ENCODE measurements at regions of chr12 and their contacts with region 1.

Region 1: GRCh38 chr12:124906606-124907261 is 7.7 kb downstream of the UBC start:
- DNase-seq: peak; percentile 92
- ATAC-seq: peak; percentile 71
- H3K4me3 Mint-ChIP-seq: no peak overlapping the region
- H3K27ac Mint-ChIP-seq: no peak overlapping the region
- H3K4me1 Mint-ChIP-seq: peaks cover 35% of the 10 kb centered on the region
- H3K27me3 Mint-ChIP-seq: no peaks in the 10 kb centered on the region
- CTCF ChIP-seq: peak; percentile 91

Region 2: DNA sequence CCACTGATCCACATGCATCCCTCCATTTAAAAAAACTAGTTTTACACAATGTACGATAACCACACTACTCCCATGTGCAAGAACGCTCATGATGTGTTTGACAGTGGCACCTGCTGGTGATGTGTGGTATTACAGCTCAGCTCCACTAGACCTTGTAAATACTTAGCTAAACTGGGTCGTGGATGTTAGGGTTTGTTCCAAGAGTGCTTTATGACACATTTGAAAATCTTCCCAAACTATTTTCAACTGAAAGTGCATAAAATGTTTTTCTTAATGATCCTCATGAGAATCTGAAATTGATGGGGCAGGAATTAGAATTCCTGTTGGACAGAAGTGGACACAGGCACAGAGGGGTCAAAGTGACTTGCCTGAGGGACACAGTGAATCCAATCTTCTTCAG is 142.3 kb before region 1 on chr12:
- CTCF ChIA-PET with region 1: no interaction called
- POLR2A ChIA-PET with region 1: no interaction called
- DNase-seq: peak; percentile 61
- ATAC-seq: no peak; the same call in 1 of the 2 replicates
- H3K4me3 Mint-ChIP-seq: no peak overlapping the region
- H3K27ac Mint-ChIP-seq: no peak overlapping the region
- H3K4me1 Mint-ChIP-seq: no peaks in the 10 kb centered on the region
- H3K27me3 Mint-ChIP-seq: peaks cover 3% of the 10 kb centered on the region
- CTCF ChIP-seq: peak; percentile 86

Region 3: DNA sequence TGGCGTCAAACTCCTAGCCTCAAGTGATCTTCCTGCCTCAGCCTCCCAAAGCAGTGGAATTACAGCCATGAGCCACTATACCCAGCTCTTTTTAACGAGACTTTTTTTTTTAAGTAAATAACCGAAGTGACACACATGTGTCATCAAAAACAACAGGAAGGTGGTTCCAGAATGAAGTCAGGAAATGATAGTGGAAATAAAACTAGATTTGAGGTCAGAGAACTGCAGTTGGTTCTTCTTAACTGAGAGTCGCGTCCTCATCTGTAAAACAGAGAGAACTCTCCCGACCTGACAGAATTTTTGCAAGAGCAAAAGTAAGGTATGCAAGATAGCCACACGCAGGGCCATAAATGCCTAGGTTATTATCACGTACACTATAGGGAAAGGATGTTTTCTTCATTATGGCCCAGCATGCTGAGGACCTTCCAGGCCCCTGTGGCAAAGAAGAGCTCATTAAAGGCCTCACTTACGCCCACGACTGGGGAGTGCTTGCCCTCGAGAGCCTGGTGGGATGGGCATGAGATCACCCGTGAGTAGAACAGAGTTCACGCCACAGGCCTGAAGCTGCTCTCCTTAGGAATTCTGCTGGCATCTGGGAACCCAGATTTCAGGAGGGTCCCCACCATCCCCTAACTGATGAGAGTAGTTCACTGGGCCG is 110.3 kb before region 1 on chr12:
- CTCF ChIA-PET with region 1: interaction called, 17 read pairs
- POLR2A ChIA-PET with region 1: no interaction called
- DNase-seq: no peak
- ATAC-seq: no peak
- H3K4me3 Mint-ChIP-seq: no peak overlapping the region
- H3K27ac Mint-ChIP-seq: no peak overlapping the region
- H3K4me1 Mint-ChIP-seq: peaks cover 15% of the 10 kb centered on the region
- H3K27me3 Mint-ChIP-seq: no peaks in the 10 kb centered on the region
- CTCF ChIP-seq: no peak

Region 4: GRCh38 chr12:124851342-124851741 is 55.4 kb before region 1 on chr12:
- CTCF ChIA-PET with region 1: interaction called, 14 read pairs
- POLR2A ChIA-PET with region 1: no interaction called
- DNase-seq: no peak
- ATAC-seq: no peak
- H3K4me3 Mint-ChIP-seq: no peak overlapping the region
- H3K27ac Mint-ChIP-seq: no peak overlapping the region
- H3K4me1 Mint-ChIP-seq: peaks cover 21% of the 10 kb centered on the region
- H3K27me3 Mint-ChIP-seq: no peaks in the 10 kb centered on the region
- CTCF ChIP-seq: no peak

Region 5: GRCh38 chr12:124884587-124885438 is 21.9 kb before region 1 on chr12:
- CTCF ChIA-PET with region 1: interaction called, 28 read pairs
- POLR2A ChIA-PET with region 1: no interaction called
- DNase-seq: peak; percentile 56
- ATAC-seq: peak; percentile 68
- H3K4me3 Mint-ChIP-seq: no peak overlapping the region; the same call in 1 of the 2 replicates
- H3K27ac Mint-ChIP-seq: peak overlapping the region; percentile 29; the same call in 1 of the 2 replicates
- H3K4me1 Mint-ChIP-seq: peaks cover 29% of the 10 kb centered on the region
- H3K27me3 Mint-ChIP-seq: no peaks in the 10 kb centered on the region
- CTCF ChIP-seq: no peak

Region 6: GRCh38 chr12:124940549-124941527 is 34.1 kb after region 1 on chr12:
- CTCF ChIA-PET with region 1: interaction called, 53 read pairs
- POLR2A ChIA-PET with region 1: interaction called, 5 read pairs
- DNase-seq: peak; percentile 88
- ATAC-seq: peak; percentile 39
- H3K4me3 Mint-ChIP-seq: no peak overlapping the region
- H3K27ac Mint-ChIP-seq: no peak overlapping the region
- H3K4me1 Mint-ChIP-seq: peaks cover 14% of the 10 kb centered on the region
- H3K27me3 Mint-ChIP-seq: no peaks in the 10 kb centered on the region
- CTCF ChIP-seq: peak; percentile 61

Region 7: GRCh38 chr12:125006206-125006764 is 99.6 kb after region 1 on chr12:
- CTCF ChIA-PET with region 1: no interaction called
- POLR2A ChIA-PET with region 1: no interaction called
- DNase-seq: no peak
- ATAC-seq: no peak
- H3K4me3 Mint-ChIP-seq: no peak overlapping the region
- H3K27ac Mint-ChIP-seq: 0 out of 2 replicates have a peak overlapping the region, but pooled peaks have one; percentile 15
- H3K4me1 Mint-ChIP-seq: no peaks in the 10 kb centered on the region
- H3K27me3 Mint-ChIP-seq: no peaks in the 10 kb centered on the region
- CTCF ChIP-seq: no peak